Common myeloid progenitor, CD34-positive (primary cell): ENCODE measurements at regions of chr14 and their contacts with region 1.

Region 1: DNA sequence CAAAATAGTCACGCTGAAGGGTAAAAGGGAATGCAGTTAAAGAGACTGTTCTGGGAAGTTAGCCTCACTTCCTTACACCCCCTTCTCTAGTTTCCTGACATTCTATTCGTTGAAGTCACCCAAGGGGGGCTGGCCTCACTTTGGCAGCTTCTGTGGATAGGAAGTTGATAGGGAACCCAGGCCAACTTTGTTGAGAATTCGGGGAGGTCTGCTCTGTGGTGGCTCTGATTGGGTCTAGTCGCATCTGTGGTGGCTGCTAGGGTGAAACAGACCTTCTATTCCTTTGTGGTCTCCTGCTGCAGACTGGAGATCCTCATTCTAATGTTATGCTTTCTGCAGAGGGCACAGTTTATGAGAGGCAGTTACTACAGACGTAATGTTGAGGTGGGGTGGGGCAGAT is 28.8 kb upstream of the GZMB start:
- DNase-seq: peak; percentile 47 to 91 (median 89)
- H3K4me3 ChIP-seq: peak overlapping the region in 4 of 7 experiments; percentile 33 to 52 (median 40)
- H3K27ac ChIP-seq: no peak overlapping the region
- H3K4me1 ChIP-seq: peaks cover 20 to 69% (median 44%) of the 10 kb centered on the region in 4 experiments
- H3K27me3 ChIP-seq: no peaks in the 10 kb centered on the region

Region 2: GRCh38 chr14:24673534-24674203 is 10.9 kb after region 1 on chr14:
- CTCF ChIA-PET with region 1: interaction called, 13 read pairs
- POLR2A ChIA-PET with region 1: no interaction called
- DNase-seq: peak in 2 of 3 donors; percentile 38 to 52
- H3K4me3 ChIP-seq: peak overlapping the region in 4 of 7 experiments; percentile 21 to 65 (median 57)
- H3K27ac ChIP-seq: peak overlapping the region; percentile 17 to 50
- H3K4me1 ChIP-seq: peaks cover 17 to 37% (median 24%) of the 10 kb centered on the region in 4 experiments
- H3K27me3 ChIP-seq: no peaks in the 10 kb centered on the region